ENCODE measurements at regions of chr13 and their contacts with region 1.

Region 1: DNA sequence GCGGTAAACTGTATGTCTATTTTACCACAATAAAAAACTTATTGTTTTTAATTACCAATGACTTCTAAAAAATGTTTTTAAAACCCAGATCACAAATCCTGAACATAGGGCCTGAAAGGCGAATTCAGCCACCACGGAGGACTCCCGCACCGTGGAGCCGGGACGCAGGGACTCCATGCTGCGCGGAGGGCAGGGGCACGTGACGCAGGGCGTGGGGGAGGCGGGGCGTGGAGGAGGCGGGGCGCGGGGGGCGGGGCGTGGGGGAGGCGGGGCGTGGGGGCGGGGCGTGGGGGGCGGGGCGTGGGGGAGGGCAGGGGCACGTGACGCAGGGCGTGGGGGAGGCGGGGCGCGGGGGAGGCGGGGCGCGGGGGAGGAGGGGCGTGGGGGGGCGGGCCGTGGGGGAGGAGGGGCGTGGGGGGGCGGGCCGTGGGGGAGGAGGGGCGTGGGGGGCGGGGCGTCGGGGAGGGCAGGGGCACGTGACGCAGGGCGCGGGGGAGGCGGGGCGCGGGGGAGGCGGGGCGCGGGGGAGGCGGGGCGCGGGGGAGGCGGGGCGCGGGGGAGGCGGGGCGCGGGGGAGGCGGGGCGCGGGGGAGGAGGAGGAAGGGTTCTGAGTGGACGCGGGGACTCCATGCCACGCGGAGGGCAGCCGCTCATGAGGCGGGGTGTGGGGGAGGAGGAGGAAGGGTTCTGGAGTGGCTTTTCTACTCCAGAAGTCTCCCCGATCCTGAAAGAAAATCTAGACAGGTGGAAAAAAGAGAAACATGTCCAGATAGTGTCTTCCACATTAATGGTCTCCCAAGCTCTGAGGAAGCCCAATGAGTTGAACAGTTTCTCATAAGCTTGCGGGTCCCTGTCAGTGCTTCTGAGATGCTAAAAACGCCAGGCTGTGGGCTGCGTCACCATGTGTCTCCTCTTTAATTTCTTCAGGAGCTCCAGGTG is 4.4 kb upstream of the PROZ start:
- DNase-seq: peak; percentile 83 to 91 (median 86)
- H3K4me3 ChIP-seq: peak overlapping the region; percentile 38
- H3K27ac ChIP-seq: peak overlapping the region; percentile 57 to 71
- H3K4me1 ChIP-seq: peaks cover 5% of the 10 kb centered on the region
- H3K27me3 ChIP-seq: no peaks in the 10 kb centered on the region
- CTCF ChIP-seq: no peak
- EP300 ChIP-seq: no peak
- POLR2A ChIP-seq: peak; percentile 65

Region 2: DNA sequence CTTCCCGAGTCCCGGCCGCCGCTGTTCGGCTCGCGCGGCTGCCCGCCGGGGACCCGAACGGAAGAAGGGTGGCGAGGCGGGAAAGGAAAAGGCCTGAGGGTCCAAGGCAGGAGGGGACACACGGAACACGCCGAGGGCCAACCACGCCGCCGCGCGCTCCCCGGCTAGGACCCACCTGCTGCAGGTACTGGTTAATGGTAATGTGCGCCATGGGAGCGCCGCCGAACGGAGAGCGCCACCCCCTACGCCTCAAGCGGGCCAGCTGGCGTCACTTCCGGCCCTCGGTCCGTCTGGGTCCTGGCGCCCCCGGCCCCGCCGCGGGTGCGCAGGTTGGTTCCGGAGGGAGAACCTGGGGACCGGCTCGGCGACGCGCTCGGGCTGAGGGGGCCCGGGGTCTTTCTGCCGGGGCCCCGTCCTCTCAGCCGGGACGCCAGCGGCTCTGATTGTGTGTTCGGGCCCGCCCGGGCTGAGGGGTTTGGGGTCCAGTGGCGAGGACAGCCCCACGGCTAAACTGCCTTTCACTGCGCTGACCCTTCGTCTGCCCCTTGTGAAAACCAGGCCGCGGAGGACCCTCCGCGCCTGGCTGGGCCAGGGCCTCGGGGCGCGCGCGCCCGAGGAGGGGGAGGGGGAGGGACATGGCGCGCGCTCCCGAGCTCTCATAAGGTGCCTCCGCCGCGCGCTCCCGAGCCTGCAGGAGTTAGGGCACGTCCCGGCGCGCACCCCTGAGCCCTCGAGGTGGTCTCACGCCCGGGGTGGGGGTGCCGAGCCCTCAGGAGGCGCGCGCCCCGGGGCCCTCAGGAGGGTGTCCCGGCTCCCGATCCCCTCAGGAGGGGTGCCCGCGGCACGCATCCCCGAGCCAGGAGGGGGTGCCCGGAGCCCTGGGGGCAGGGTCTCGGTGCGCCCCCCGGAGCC is 54.6 kb after region 1 on chr13 and contains the start of gene PCID2:
- intact Hi-C with region 1: loop called in 1 of 4 experiments (anchors 10 kb)
- DNase-seq: peak; percentile 86 to 94 (median 89)
- H3K4me3 ChIP-seq: peak within 1 kb of the TSS; percentile 70
- H3K27ac ChIP-seq: peak within 1 kb of the TSS; percentile 95
- H3K4me1 ChIP-seq: peaks cover 12% of the 10 kb centered on the region
- H3K27me3 ChIP-seq: no peaks in the 10 kb centered on the region
- CTCF ChIP-seq: no peak
- EP300 ChIP-seq: no peak
- POLR2A ChIP-seq: peak; percentile 87
- total RNA-seq, gene PCID2: 43.5 to 56.2 (median 53.5) TPM

Region 3: GRCh38 chr13:113337556-113337955 is 183.5 kb after region 1 on chr13:
- intact Hi-C with region 1: no loop called
- DNase-seq: no peak
- H3K4me3 ChIP-seq: no peak overlapping the region
- H3K27ac ChIP-seq: no peak overlapping the region
- H3K4me1 ChIP-seq: no peaks in the 10 kb centered on the region
- H3K27me3 ChIP-seq: no peaks in the 10 kb centered on the region
- CTCF ChIP-seq: no peak
- EP300 ChIP-seq: no peak
- POLR2A ChIP-seq: no peak

Region 4: GRCh38 chr13:113364311-113364889 is 210.3 kb after region 1 on chr13:
- intact Hi-C with region 1: loop called in 1 of 4 experiments (anchors 10 kb)
- DNase-seq: peak in 2 of 5 donors; percentile 69 to 77
- H3K4me3 ChIP-seq: peak overlapping the region; percentile 48
- H3K27ac ChIP-seq: peak overlapping the region; percentile 66 to 80
- H3K4me1 ChIP-seq: peaks cover 15% of the 10 kb centered on the region
- H3K27me3 ChIP-seq: no peaks in the 10 kb centered on the region
- CTCF ChIP-seq: no peak
- EP300 ChIP-seq: no peak
- POLR2A ChIP-seq: no peak

Measured in ovary (tissue), 10 donors.